RWPE1 (cell line): ENCODE measurements at regions of chr10 and their contacts with region 1.

Region 1: DNA sequence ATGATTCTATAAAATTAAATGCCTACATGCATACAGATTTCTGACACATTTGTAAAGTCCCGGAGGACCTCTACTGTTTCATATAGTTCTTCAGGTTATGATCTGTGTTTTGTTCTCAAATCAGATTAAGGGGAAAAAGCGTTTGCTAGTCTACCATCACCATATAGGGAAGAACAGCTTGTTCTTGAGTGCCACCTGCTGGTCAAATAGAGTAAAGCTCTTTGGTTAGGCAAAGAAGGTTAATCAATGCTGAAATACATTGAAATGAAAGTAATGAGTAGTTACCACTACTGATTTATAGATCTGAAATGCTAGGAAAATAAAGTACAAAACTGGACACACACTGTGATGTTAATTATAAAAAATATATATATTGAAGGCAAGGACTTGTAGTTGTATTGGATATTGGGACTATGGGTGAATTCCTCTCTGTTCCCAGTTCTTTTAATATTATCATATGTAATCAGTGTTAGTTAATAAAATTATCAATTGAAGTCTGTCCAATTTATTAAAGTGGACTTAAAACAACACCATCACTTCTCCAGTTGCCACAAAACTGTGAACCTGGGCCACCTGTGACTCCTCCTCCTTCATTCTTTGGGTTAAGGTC is 72.6 kb upstream of the PDLIM1 start:
- DNase-seq: peak; percentile 81
- H3K27ac ChIP-seq: no peak overlapping the region
- CTCF ChIP-seq: peak; percentile 87

Region 2: DNA sequence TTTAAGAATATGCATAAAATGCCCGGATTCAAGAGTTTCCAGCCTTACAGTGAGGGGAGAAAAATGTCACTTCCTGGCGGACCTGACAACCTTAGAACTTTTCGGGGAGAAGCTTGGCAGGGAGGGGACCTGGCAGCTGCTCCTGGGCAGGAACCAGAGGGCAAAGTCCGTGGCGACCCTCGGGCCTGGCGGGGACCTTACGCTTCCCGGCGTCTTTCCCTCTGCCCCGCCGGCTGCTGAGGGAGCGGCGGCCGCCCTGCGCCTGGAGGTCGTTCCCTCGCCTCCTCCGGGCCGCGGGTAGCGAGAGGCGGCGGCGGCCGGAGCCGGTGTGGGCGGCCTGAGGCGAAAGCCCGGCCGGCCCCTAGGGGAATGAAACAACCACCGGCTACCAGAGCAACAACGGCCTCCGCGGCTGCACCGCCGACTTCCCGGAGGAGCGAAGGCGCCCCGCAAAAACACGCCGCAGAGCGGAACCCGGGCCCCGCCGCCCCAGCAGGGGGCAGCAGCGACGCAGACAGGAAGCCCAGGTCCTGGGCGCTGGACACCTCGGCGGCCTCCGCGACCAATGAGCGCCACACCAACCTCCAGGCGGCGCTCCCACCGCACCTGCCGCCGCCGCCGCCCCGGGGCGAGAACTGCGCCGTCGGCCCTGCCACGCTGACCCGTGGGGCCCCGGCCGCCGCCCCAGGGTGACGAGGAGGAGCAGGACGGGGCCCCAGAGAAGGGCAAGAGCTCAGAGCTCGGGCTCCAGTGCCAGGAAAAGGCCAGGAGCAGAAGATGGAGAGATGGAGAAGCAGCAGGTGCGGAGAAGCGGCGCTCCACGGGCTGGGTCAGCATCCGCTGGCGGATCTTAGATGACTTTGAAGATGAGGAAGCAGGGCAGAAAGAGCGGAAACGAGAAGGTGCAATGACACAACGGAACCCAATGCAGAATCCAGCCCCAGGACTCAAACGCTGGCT is 179.9 kb before region 1 on chr10:
- CTCF ChIA-PET with region 1: interaction called, 14 read pairs
- POLR2A ChIA-PET with region 1: no interaction called
- DNase-seq: peak; percentile 89
- H3K27ac ChIP-seq: 0 out of 2 replicates have a peak overlapping the region, but pooled peaks have one; percentile 13
- CTCF ChIP-seq: peak; percentile 96

Region 3: GRCh38 chr10:95201736-95202135 is 161.7 kb before region 1 on chr10:
- CTCF ChIA-PET with region 1: interaction called, 18 read pairs
- POLR2A ChIA-PET with region 1: no interaction called
- DNase-seq: peak; percentile 80
- H3K27ac ChIP-seq: no peak overlapping the region
- CTCF ChIP-seq: no peak; the same call in 1 of the 2 replicates

Region 4: GRCh38 chr10:95246579-95247051 is 116.8 kb before region 1 on chr10:
- CTCF ChIA-PET with region 1: interaction called, 36 read pairs
- POLR2A ChIA-PET with region 1: no interaction called
- DNase-seq: no peak
- H3K27ac ChIP-seq: peak overlapping the region; percentile 58
- CTCF ChIP-seq: peak; percentile 83

Region 5: GRCh38 chr10:95374597-95375209 is 11.3 kb after region 1 on chr10:
- CTCF ChIA-PET with region 1: interaction called, 18 read pairs
- POLR2A ChIA-PET with region 1: no interaction called
- DNase-seq: peak; percentile 85
- H3K27ac ChIP-seq: no peak overlapping the region
- CTCF ChIP-seq: peak; percentile 84

Region 6: DNA sequence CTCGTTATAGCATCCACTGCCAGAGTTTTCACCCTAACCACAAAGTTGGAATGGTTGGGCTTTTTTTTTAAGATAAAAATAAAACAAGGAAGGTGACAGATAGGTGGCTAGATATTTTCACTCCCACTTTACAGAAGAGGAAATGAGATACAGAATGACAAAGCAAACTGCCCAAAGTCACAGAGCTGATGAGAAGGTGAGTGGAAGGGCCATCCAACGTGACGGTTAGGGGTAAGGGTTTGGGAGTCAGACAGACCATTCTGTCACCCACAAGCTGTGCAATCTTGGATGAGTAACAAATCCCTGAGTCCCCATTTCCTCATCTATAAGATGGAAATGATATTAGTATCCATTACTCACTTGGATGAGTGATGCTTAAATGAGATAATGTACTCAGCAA is 34.3 kb after region 1 on chr10:
- CTCF ChIA-PET with region 1: no interaction called
- POLR2A ChIA-PET with region 1: no interaction called
- DNase-seq: no peak
- H3K27ac ChIP-seq: no peak overlapping the region
- CTCF ChIP-seq: no peak

Region 7: GRCh38 chr10:95451568-95452524 is 88.4 kb after region 1 on chr10:
- CTCF ChIA-PET with region 1: no interaction called
- POLR2A ChIA-PET with region 1: no interaction called
- DNase-seq: peak; percentile 22
- H3K27ac ChIP-seq: no peak overlapping the region
- CTCF ChIP-seq: no peak

Region 8: DNA sequence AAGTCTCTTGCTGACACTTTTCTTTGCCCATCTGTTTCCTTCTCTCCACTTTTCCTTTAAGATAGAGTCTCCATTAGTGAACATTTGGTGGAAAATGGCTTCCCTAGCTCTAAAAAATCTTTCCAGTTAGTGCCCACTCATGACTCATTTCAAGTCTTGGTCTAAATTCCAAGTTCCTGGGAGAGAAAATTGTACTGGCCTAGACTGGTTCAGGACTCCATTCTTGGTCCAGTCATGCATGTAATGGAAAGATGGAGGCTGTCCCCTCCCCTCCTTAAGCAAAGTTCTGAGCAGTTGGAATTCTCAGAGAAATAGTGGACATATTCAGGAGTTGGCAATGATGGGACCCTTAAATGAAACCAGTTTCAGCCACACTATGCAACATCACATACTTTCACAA is 296.9 kb after region 1 on chr10:
- CTCF ChIA-PET with region 1: no interaction called
- POLR2A ChIA-PET with region 1: no interaction called
- DNase-seq: no peak
- H3K27ac ChIP-seq: no peak overlapping the region
- CTCF ChIP-seq: no peak